IMR-90 (cell line): ENCODE measurements at regions of chr12 and their contacts with region 1.

Region 1: GRCh38 chr12:89709157-89709994 is 738 bp upstream of the ATP2B1 start:
- DNase-seq: peak; percentile 99
- ATAC-seq: peak; percentile 84
- H3K4me3 ChIP-seq: peak overlapping the region; percentile 86
- H3K27ac ChIP-seq: peak overlapping the region; percentile 87
- H3K4me1 ChIP-seq: no peaks in the 10 kb centered on the region
- H3K27me3 ChIP-seq: no peaks in the 10 kb centered on the region
- CTCF ChIP-seq: 0 out of 2 replicates have a peak, but pooled peaks have one; percentile 15
- POLR2A ChIP-seq: peak; percentile 95
- RAD21 ChIP-seq: peak; percentile 28; the same call in 1 of the 2 replicates

Region 2: DNA sequence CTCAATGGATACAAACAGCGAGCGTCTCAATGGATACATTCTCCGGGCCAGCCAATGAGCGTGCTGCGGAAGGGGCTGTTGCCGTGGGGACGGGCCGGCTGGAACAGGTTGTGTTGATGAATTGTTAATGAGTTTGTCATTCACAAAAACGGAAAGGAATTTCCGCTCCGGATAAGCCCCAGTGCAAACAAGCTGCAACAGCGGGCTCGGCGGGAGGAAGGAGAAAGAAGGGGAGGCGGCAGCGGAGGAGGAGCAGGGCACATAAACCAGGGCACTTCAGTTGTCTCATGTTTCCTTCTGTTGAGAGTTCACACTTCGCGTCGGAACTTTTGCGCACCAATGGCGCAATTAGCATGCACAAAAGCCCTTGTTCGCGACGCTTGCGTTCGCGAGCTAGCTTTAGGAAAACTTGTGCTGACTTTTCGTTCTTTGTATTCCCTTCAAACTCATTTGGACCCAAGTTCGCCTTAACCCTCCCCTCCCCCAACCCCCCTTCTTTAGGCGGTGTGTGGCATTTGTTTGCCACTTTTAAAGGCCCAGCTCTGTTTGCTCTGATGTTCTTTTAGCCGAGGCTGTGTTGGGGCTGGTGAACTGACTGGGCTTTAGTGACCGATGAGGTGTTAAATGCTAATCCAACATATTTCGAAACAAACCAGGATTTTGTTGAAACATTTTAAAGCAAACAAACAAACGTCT is 356.7 kb before region 1 on chr12 and contains the start of gene DUSP6:
- CTCF ChIA-PET with region 1: no interaction called
- POLR2A ChIA-PET with region 1: no interaction called
- dilution Hi-C with region 1: no loop called
- in situ Hi-C with region 1: no loop called
- intact Hi-C with region 1: no loop called
- DNase-seq: peak; percentile 99
- ATAC-seq: peak; percentile 73
- H3K4me3 ChIP-seq: peak within 1 kb of the TSS; percentile 91
- H3K27ac ChIP-seq: peak within 1 kb of the TSS; percentile 90
- H3K4me1 ChIP-seq: peaks cover 8% of the 10 kb centered on the region; the same call in 1 of the 2 replicates
- H3K27me3 ChIP-seq: no peaks in the 10 kb centered on the region
- CTCF ChIP-seq: no peak
- POLR2A ChIP-seq: no peak
- RAD21 ChIP-seq: no peak
- total RNA-seq, gene DUSP6: 70.1 and 78.6 TPM in 2 replicates

Region 3: DNA sequence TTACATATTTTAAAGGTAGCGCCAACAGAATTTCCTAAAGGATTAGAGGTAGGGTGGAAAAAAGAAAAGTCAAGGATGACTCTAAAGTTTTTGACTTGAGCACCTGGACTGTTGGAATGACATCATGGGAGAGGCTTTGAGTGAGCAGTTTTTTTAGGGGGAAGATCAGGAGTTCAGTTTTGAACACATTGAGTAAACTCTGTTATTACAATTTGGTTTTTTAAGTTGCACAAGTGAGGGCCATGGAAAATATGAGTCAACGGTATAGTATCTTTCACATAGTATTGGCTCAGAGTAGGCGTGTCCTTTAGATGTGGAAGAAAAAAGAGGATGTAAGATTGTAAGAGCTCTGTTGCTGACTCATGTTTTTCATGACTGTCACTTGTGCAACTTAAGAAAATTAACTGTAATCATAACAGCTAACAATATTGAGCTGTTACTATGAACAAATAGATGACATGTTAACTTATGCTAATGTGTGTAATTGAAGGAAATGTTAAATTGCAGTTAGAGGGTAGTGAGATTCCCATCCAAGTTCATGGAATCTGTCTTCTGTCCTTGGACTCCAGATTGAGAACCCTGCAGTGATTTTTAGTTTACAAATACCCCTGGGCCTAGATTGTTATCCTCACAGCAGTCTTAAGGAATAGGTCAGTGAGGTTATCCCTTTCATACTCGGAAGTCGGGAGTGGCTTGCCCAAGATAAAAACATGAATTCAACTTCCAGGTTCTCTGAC is 47.4 kb after region 1 on chr12:
- CTCF ChIA-PET with region 1: no interaction called
- POLR2A ChIA-PET with region 1: no interaction called
- dilution Hi-C with region 1: no loop called
- in situ Hi-C with region 1: no loop called
- intact Hi-C with region 1: loop called (anchors 2 kb)
- DNase-seq: peak; percentile 99
- ATAC-seq: peak; percentile 97
- H3K4me3 ChIP-seq: no peak overlapping the region
- H3K27ac ChIP-seq: peak overlapping the region; percentile 76; the same call in 1 of the 2 replicates
- H3K4me1 ChIP-seq: peaks cover 8% of the 10 kb centered on the region
- H3K27me3 ChIP-seq: no peaks in the 10 kb centered on the region
- CTCF ChIP-seq: no peak
- POLR2A ChIP-seq: no peak
- RAD21 ChIP-seq: 0 out of 2 replicates have a peak, but pooled peaks have one; percentile 5

Region 4: DNA sequence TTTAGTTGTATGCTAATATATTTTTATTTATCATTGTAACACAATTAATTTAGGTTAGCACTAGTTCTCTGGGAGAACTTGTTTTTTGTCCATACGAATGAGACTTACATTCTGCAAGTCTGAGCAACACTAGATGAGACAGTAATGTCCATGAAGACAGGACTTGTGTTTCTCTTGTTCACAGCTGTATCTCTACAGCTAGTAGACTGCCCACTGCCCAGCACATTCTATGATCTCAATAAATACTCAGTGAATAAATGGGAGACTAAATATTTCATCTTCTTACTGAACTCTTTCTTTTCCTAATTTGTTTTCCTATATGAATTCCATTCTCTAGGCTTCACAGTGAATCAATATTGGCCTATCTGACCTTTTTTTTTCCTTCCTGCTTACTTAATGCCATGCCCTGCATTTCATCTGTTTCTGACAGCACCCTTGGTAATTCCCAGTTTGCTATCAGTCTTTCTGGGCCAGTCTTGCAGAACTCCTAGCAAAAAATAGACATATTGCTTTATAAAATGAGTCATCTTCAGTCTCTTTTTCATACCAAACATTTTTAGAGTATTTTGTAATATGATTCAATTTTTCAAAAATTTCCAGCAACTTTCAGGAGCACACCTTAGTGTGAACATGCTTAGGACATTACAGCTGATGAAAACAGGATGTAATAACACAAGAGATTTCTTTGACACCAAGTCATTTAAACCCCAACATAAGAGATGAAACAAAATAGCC is 184.8 kb after region 1 on chr12:
- CTCF ChIA-PET with region 1: no interaction called
- POLR2A ChIA-PET with region 1: no interaction called
- dilution Hi-C with region 1: no loop called
- in situ Hi-C with region 1: no loop called
- intact Hi-C with region 1: no loop called
- DNase-seq: peak; percentile 47
- ATAC-seq: peak; percentile 61
- H3K4me3 ChIP-seq: no peak overlapping the region
- H3K27ac ChIP-seq: no peak overlapping the region
- H3K4me1 ChIP-seq: peaks cover 2% of the 10 kb centered on the region
- H3K27me3 ChIP-seq: no peaks in the 10 kb centered on the region
- CTCF ChIP-seq: no peak
- POLR2A ChIP-seq: no peak
- RAD21 ChIP-seq: no peak

Region 5: GRCh38 chr12:89999699-90000505 is 290.5 kb after region 1 on chr12:
- CTCF ChIA-PET with region 1: no interaction called
- POLR2A ChIA-PET with region 1: no interaction called
- dilution Hi-C with region 1: no loop called
- in situ Hi-C with region 1: no loop called
- intact Hi-C with region 1: loop called (anchors 5 kb)
- DNase-seq: peak; percentile 65
- ATAC-seq: peak; percentile 78
- H3K4me3 ChIP-seq: no peak overlapping the region
- H3K27ac ChIP-seq: peak overlapping the region; percentile 73; the same call in 1 of the 2 replicates
- H3K4me1 ChIP-seq: peaks cover 6% of the 10 kb centered on the region
- H3K27me3 ChIP-seq: no peaks in the 10 kb centered on the region
- CTCF ChIP-seq: no peak
- POLR2A ChIP-seq: no peak
- RAD21 ChIP-seq: no peak

Region 6: DNA sequence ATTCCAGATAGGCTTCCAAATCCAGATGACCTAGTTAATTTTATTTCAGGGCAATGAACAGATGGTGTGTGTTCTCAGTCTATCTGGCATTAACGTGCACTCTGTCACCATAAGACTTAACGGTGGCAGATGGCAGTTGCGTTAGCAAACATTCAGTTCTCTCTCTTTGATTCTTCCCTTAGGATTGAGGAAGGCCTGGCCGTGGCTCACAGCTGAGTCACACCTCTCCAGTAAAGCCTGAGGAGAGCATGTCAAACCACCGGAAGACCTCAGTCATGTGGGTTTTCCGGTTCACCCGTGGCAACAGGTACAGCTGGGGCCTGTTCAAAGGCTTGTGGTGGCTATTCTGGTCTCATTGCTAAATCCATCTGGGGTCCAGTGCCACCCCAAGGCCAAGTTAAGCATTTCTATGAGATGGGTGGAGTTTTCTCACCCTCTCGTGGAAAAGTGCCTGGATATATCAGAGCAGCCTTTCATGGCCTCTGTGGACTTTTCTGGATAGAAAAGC is 544.4 kb after region 1 on chr12:
- CTCF ChIA-PET with region 1: no interaction called
- POLR2A ChIA-PET with region 1: no interaction called
- dilution Hi-C with region 1: no loop called
- in situ Hi-C with region 1: no loop called
- intact Hi-C with region 1: loop called (anchors 5 kb)
- DNase-seq: peak; percentile 92
- ATAC-seq: peak; percentile 87
- H3K4me3 ChIP-seq: no peak overlapping the region
- H3K27ac ChIP-seq: no peak overlapping the region
- H3K4me1 ChIP-seq: no peaks in the 10 kb centered on the region; the same call in 1 of the 2 replicates
- H3K27me3 ChIP-seq: no peaks in the 10 kb centered on the region
- CTCF ChIP-seq: peak; percentile 31
- POLR2A ChIP-seq: no peak
- RAD21 ChIP-seq: peak; percentile 43; the same call in 1 of the 2 replicates

Region 7: DNA sequence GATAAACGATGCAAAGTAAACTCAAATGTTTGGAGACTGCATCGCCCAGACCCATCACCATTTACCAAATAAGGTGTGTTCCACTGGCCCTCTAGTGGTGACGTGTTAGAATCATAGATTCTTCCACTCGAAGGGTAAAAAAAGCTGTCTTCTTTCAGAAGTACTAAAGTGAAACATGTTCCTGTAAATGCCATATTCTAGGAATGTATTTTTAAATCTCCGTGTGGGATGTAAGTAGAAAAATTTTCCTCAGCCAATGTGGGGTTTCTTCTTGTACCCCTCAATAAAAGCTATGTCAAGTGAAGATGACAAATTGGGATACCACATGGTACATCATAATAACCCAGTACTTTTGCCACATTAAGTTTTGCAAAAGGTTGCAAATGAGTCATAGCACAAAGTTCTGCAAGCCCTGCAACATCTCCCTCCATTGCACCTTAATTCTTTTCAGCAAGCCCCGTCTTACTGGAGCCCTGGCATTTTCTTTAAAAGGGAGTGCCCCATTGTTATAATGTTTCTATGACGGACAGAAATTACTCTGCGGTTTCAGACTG is 1144.8 kb after region 1 on chr12:
- CTCF ChIA-PET with region 1: no interaction called
- POLR2A ChIA-PET with region 1: no interaction called
- dilution Hi-C with region 1: no loop called
- in situ Hi-C with region 1: no loop called
- intact Hi-C with region 1: loop called (anchors 5 kb)
- DNase-seq: peak; percentile 63
- ATAC-seq: peak; percentile 92
- H3K4me3 ChIP-seq: no peak overlapping the region
- H3K27ac ChIP-seq: no peak overlapping the region
- H3K4me1 ChIP-seq: no peaks in the 10 kb centered on the region
- H3K27me3 ChIP-seq: no peaks in the 10 kb centered on the region
- CTCF ChIP-seq: peak; percentile 68
- POLR2A ChIP-seq: no peak
- RAD21 ChIP-seq: peak; percentile 58